Activated B cell treated with CpG ODN at 0.5 μM for 24 hours (primary cell): ENCODE measurements at regions of chr6 and their contacts with region 1.

Region 1: DNA sequence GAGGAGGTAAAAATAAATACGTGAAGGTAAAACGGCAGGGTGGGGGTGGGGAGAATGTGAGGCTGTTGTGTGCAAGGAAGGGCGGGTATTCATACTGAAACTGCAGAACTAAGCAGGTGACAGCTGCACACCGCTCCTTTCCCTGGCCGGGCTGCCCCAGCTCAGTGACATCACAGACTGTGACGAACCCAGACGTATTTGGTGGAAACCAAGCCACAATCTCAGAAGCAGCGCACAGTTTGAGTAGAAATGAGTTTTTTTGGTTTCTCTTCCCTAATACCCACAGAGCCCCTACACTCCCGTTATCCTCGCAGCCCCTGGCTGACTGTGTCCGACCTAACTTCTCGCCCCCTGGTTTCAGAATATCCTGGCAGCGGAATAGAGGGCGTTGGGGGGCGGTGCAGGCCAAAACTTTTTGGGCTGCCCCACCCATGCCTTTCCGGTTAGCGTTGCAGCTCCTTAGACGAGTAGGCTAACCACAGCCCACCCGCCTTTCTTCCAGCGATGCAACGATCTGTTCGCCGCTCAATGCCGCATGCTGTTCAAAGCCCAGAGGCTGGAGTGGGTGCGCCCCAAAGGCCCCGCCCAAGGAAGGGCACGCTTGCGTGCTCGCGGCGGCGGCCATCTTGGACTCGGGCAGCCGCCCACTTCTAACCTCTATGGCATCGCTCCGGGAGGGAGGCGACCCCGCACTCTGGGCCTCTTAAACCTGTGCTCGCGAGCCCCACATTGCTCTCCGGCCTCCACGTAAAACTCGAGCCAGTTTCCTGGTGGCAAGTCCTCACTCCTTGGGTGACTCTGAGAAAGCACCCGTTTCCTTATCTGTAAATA is 9.1 kb downstream of the BAK1 start:
- DNase-seq: peak; percentile 81
- ATAC-seq: peak; percentile 84
- H3K4me3 Mint-ChIP-seq: peak overlapping the region; percentile 89
- H3K27ac Mint-ChIP-seq: peak overlapping the region; percentile 100
- H3K4me1 Mint-ChIP-seq: peaks cover 38% of the 10 kb centered on the region
- H3K27me3 Mint-ChIP-seq: no peaks in the 10 kb centered on the region
- CTCF ChIP-seq: no peak

Region 2: DNA sequence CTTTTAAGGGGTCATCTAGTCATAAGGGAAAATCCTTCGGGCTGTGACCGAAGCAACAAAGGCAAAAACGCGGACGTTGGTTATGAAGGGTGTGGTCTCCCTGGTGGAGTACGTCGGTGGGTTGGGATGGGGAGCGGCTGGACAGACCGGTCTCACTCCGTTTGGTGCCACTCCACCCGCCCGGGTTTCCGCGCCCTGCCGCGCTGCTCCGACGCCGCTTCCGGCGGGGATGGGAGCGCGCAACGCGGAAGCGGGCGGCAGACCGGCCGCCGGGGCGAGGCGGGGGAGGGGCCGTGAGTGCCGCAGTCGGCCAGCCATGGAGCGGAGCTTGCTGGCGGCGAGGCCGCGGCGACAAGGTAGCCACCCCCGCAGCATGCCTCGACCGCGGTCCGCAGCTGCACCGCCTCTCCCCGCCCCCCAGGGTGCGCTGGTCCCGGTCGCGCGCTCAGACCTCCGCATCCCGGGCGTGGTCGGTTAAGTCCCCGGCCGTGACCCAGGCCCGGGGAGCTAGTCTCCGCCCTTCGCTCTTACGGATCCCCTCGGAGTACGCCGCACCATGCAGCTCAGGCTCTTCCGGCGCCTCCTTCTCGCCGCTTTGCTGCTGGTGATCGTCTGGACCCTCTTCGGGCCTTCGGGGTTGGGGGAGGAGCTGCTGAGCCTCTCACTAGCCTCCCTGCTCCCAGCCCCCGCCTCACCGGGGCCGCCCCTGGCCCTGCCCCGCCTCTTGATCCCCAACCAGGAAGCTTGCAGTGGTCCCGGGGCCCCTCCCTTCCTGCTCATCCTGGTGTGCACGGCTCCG is 294.0 kb before region 1 on chr6 and contains the start of gene B3GALT4:
- CTCF ChIA-PET with region 1: no interaction called
- POLR2A ChIA-PET with region 1: interaction called, 8 read pairs
- intact Hi-C with region 1: loop called (anchors 2 kb)
- DNase-seq: peak; percentile 77
- ATAC-seq: peak; percentile 68
- H3K4me3 Mint-ChIP-seq: peak within 1 kb of the TSS; percentile 92
- H3K27ac Mint-ChIP-seq: peak within 1 kb of the TSS; percentile 100
- H3K4me1 Mint-ChIP-seq: peaks cover 62% of the 10 kb centered on the region
- H3K27me3 Mint-ChIP-seq: no peaks in the 10 kb centered on the region
- CTCF ChIP-seq: no peak
- total RNA-seq, gene B3GALT4: 19.1 and 19.4 TPM in 2 replicates

Region 3: DNA sequence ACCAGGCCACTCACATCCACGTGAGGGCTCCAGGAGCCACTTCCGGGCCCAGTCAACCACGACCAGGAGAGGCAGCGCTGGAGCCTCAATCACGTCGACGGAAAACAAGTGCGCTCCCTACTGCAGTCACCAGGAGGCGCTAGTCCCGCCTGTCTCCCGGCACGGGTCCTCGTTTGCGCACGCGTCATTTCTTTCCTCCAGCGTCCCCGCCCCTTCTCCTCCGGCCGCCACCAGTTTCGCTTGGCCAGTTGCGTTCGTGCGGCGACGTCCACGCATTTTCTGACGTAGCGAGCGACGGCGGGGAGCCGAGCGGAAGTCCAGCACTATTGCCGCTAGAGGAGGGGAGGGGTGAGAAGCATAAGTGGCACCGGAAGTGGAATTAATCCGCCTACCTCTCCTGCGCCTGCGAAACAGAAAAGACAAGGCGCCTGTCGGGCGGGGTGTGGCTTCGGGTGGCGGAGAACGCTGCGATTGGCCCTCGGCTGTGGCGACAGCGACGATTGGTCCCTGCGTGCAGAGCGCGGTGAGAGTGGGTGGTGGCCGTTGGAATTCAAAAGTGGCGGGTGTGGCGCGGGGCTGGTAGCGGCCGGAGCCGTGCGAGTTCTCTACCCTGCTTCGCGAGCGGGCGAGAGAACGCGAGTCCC is 179.6 kb before region 1 on chr6 and contains the start of gene KIFC1:
- CTCF ChIA-PET with region 1: no interaction called
- POLR2A ChIA-PET with region 1: interaction called, 5 read pairs
- intact Hi-C with region 1: loop called (anchors 1 kb)
- DNase-seq: peak; percentile 95
- ATAC-seq: peak; percentile 88
- H3K4me3 Mint-ChIP-seq: peak within 1 kb of the TSS; percentile 79
- H3K27ac Mint-ChIP-seq: peak within 1 kb of the TSS; percentile 95
- H3K4me1 Mint-ChIP-seq: peaks cover 25% of the 10 kb centered on the region
- H3K27me3 Mint-ChIP-seq: no peaks in the 10 kb centered on the region
- CTCF ChIP-seq: peak; percentile 77
- total RNA-seq, gene KIFC1: 1.9 and 2.2 TPM in 2 replicates

Region 4: DNA sequence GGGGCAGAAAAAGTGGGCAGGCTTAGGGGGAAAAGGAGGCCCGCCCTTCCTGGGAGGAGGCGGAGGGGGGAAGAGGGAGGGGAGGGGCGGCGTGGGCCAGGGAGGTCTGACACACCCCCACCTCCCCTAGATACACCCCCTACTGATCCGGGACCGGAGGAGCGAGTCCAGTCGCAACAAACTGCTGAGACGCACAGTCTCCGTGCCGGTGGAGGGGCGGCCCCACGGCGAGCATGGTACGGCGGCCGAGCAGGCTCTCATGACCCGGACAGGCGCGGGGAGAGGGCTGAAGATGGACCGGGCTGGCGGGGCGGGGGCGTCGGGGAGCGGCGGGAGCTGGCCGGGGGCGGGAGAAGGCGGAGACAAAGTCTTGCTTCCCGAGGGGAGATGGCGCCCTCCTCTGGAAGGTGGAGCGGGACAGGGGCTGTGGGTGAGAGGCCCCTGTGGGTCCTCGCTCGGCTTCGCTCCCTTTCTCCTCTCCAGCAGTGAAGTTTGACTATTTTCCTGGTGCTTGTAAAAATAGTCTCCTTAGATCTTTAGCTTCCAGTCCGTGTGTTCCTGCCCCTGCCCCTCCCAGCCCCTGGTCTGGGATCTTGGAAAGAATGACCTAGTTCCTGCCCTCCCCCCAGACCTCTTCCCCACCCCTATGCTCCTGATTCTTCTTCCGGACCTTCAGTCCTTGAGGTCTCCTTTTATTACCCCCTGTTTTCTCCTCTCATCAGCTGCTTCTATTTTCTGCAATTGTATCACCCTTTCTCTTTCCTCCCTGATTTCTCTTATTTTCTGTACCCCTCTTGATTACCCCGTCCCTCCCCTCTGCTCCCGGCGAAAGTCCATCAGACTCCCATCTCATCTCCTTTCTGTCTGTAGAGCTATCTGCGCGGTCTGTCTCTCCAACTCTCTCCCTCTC is 145.1 kb before region 1 on chr6:
- CTCF ChIA-PET with region 1: interaction called, 3 read pairs
- POLR2A ChIA-PET with region 1: interaction called, 15 read pairs
- intact Hi-C with region 1: loop called (anchors 2 kb)
- DNase-seq: peak; percentile 68
- ATAC-seq: peak; percentile 60
- H3K4me3 Mint-ChIP-seq: peak overlapping the region; percentile 87
- H3K27ac Mint-ChIP-seq: peak overlapping the region; percentile 89
- H3K4me1 Mint-ChIP-seq: peaks cover 66% of the 10 kb centered on the region
- H3K27me3 Mint-ChIP-seq: no peaks in the 10 kb centered on the region
- CTCF ChIP-seq: no peak

Region 5: DNA sequence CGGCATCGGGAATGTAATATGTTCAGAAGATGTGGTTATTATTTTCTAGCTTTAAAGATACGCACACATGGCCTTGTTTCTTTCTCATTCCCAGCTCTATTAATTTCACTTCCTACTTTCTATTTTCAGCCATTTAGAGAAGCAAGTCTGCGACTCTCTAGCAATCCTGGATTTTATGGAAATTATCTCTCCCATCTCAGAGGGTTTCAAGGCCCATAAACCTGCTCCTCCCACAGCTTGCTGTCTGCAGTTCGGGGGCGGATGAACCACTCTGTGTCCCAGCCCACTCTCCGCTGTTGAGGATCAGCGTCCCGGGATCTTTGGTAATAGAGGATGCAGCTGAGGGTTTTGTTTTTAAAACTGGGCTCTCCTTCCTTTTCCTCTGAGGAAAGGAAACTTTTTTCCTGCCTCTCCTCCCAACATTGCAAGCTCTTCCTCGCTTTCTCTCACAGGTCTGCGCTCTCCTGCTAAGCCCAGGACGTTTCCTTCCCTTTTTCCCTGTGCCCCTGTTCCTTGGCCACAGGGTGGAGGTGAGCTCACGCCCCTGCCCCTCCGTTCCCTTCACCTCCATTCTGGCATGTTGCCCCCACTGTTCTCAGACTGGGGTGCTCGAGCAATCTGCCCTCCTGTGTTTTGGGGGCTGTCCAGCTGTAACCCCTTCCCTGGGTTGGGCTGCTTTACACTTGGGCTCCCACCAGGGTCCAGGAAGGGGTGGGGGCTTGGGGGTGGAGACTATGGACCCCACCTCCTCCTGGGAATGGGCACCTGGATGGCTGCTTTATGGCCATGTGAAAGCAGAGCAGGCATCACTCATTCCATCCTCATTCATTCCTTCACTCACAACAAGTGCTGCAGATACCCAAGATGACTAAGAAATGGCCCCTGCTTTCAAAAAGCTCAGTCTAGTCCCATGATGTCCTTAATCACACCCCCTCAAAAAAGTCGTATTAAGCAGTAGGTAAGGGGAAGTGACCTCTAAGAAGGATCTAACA is 61.8 kb before region 1 on chr6:
- CTCF ChIA-PET with region 1: no interaction called
- POLR2A ChIA-PET with region 1: interaction called, 4 read pairs
- intact Hi-C with region 1: loop called (anchors 1 kb)
- DNase-seq: no peak
- ATAC-seq: peak; percentile 18
- H3K4me3 Mint-ChIP-seq: peak overlapping the region; percentile 9
- H3K27ac Mint-ChIP-seq: no peak overlapping the region
- H3K4me1 Mint-ChIP-seq: peaks cover 17% of the 10 kb centered on the region
- H3K27me3 Mint-ChIP-seq: peaks cover 6% of the 10 kb centered on the region
- CTCF ChIP-seq: no peak

Region 6: DNA sequence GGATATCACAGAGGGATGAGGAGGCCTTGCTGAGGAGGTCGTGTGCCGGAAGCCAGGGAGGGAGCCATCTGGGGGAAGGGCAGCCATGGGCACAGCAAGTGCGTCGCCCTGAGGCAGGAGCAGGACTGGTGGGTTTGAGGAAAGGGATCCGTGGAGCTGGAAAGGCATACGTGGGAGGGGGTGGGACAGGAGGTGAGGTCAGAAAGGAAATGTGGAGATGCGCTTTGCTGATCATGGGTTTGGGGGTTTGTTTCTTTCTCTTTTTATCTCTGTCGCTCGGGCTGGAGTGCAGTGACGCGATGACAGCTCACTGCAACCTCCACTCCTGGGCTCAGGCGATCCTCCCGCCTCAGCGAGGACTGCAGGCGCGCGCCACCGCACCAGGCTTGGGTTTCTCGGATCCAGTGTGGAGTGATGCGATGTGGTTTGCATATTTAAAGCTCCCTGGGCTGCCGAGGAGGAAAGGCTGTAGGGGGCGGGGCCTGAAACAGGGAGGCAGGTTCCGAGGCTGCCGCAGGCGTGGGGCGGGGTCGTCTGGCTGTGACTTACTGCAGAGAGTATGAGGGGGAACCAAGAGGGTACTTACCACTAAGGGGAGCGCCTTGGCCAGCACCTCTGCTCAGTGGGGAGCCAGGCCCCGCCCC is 21.5 kb after region 1 on chr6:
- CTCF ChIA-PET with region 1: no interaction called
- POLR2A ChIA-PET with region 1: interaction called, 17 read pairs
- intact Hi-C with region 1: loop called (anchors 1 kb)
- DNase-seq: peak; percentile 64
- ATAC-seq: peak; percentile 51
- H3K4me3 Mint-ChIP-seq: peak overlapping the region; percentile 58
- H3K27ac Mint-ChIP-seq: peak overlapping the region; percentile 93
- H3K4me1 Mint-ChIP-seq: peaks cover 68% of the 10 kb centered on the region
- H3K27me3 Mint-ChIP-seq: no peaks in the 10 kb centered on the region
- CTCF ChIP-seq: no peak

Region 7: GRCh38 chr6:35259194-35259947 is 1688.3 kb after region 1 on chr6 and contains the start of gene ZNF76:
- CTCF ChIA-PET with region 1: no interaction called
- POLR2A ChIA-PET with region 1: no interaction called
- intact Hi-C with region 1: loop called (anchors 2 kb)
- DNase-seq: peak; percentile 89
- ATAC-seq: peak; percentile 81
- H3K4me3 Mint-ChIP-seq: peak within 1 kb of the TSS; percentile 97
- H3K27ac Mint-ChIP-seq: peak within 1 kb of the TSS; percentile 93
- H3K4me1 Mint-ChIP-seq: peaks cover 53% of the 10 kb centered on the region
- H3K27me3 Mint-ChIP-seq: no peaks in the 10 kb centered on the region
- CTCF ChIP-seq: no peak
- total RNA-seq, gene ZNF76: 54.8 and 57.9 TPM in 2 replicates